ENCODE measurements at regions of chr18 and their contacts with region 1.

Region 1: DNA sequence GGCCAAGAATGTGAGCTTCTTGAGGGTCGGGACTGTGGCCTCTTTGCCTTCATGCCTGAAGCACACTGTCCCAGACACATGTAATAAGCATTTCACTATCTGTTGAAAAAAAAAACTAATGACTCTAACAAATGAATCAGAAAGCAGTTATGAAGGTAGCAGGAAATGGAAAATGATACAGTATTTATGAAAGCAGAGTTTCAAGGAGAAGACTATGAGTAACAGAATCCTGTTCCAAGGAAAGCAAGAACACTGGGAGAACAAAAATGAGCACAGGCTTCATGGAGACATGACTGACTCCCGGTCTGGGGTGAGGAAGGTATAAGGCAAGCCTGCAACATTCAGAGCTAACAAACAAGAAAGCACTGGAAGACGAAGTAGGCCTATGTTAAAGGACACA is 190.8 kb downstream of the RNF152 start:
- DNase-seq: peak in 1 of 2 donors; percentile 72
- H3K4me3 ChIP-seq: no peak overlapping the region
- H3K27ac ChIP-seq: peak overlapping the region; percentile 67 to 83
- H3K4me1 ChIP-seq: peaks cover 5 to 13% of the 10 kb centered on the region in 2 donors
- H3K27me3 ChIP-seq: no peaks in the 10 kb centered on the region
- CTCF ChIP-seq: no peak

Region 2: DNA sequence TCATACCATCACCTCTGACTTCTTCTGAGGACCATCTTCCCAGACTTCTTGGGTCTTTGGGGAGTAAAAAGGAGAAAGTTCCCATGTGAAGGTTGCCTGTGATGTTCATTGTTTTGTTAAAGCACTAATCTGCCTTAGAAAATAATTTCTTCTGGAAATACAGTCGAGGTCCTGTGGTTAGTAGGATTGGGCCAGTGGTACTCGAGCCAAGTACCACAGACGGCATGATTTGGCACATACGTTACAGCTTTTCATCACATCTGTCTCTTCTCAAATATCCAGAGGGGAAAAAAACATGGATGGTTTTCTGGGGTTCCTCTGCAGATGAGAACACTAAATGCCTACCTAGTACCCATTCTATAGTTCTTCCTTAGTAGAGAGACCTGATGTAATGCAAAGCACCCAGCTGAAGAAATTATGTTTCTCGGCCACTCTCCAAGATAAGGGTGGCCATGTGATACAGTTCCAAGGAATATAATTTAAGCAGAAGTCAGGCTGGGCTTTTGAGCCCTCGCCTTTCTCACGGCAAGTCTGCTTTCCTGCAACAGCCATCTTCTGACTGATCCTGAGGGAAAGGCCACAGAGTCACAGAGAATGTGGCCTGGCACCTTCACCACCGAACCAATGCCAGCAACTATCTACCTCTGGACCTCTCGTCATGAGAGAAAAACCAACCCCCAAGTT is 29.8 kb after region 1 on chr18:
- intact Hi-C with region 1: loop called (anchors 2 kb)
- DNase-seq: no peak
- H3K4me3 ChIP-seq: no peak overlapping the region
- H3K27ac ChIP-seq: peak overlapping the region; percentile 86 to 90
- H3K4me1 ChIP-seq: peaks cover 12 to 30% of the 10 kb centered on the region in 2 donors
- H3K27me3 ChIP-seq: no peaks in the 10 kb centered on the region
- CTCF ChIP-seq: no peak